ENCODE measurements at regions of chr17 and their contacts with region 1.

Region 1: GRCh38 chr17:44775136-44775837 is 16.5 kb downstream of the ADAM11 start:
- DNase-seq: peak; percentile 97
- ATAC-seq: peak; percentile 95
- H3K4me3 ChIP-seq: peak overlapping the region; percentile 14 to 70 (median 66)
- H3K4me3 Mint-ChIP-seq: peak overlapping the region; percentile 92
- H3K27ac ChIP-seq: no peak overlapping the region
- H3K27ac Mint-ChIP-seq: peak overlapping the region; percentile 47
- H3K4me1 ChIP-seq: peaks cover 17 to 26% of the 10 kb centered on the region in 2 donors
- H3K4me1 Mint-ChIP-seq: peaks cover 22% of the 10 kb centered on the region
- H3K27me3 ChIP-seq: peaks cover 0 to 39% (median 4%) of the 10 kb centered on the region in 4 experiments
- H3K27me3 Mint-ChIP-seq: peaks cover 11% of the 10 kb centered on the region
- CTCF ChIP-seq: peak; percentile 71

Region 2: DNA sequence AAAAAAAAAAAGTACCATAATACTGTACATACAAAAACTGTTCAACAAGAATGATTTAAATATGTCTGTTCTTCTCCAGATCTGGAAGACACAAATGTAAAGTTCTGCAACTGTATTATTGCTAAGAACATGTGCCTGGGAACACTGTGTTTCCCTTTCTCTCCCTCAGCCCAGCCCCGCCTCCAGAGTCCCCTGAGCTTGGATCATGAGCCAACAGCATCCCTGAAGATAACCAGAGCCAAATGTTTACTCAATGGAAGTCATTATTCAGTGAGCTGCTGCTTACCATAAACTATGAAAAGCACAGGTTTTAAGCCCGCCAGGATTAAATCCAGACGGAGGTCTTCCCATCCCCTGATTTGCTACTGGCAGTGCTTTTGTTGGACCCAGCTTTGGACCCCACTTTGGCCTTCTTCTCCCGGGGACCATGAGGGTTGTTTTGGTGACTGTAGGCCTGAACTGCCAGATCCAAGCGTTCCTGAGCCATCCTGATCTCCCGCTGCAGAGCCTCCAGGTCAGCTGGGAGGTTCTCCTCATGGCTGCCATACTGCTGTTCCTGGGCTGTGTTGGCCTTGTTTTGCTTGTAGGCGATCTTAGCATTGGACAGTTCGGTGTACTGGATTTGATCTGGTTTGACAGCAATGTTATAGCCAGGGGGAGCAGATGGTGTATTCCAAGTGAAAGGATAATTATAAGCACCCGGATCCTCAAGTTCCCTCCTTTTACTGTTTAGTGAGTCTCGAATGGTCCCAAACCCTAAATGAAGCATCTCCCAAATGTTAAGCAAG is 29.2 kb after region 1 on chr17:
- CTCF ChIA-PET with region 1: no interaction called
- POLR2A ChIA-PET with region 1: no interaction called
- intact Hi-C with region 1: no loop called
- DNase-seq: no peak
- ATAC-seq: no peak
- H3K4me3 ChIP-seq: no peak overlapping the region
- H3K4me3 Mint-ChIP-seq: no peak overlapping the region
- H3K27ac ChIP-seq: no peak overlapping the region
- H3K27ac Mint-ChIP-seq: no peak overlapping the region
- H3K4me1 ChIP-seq: no peaks in the 10 kb centered on the region
- H3K4me1 Mint-ChIP-seq: no peaks in the 10 kb centered on the region
- H3K27me3 ChIP-seq: no peaks in the 10 kb centered on the region
- H3K27me3 Mint-ChIP-seq: no peaks in the 10 kb centered on the region
- CTCF ChIP-seq: no peak

Region 3: DNA sequence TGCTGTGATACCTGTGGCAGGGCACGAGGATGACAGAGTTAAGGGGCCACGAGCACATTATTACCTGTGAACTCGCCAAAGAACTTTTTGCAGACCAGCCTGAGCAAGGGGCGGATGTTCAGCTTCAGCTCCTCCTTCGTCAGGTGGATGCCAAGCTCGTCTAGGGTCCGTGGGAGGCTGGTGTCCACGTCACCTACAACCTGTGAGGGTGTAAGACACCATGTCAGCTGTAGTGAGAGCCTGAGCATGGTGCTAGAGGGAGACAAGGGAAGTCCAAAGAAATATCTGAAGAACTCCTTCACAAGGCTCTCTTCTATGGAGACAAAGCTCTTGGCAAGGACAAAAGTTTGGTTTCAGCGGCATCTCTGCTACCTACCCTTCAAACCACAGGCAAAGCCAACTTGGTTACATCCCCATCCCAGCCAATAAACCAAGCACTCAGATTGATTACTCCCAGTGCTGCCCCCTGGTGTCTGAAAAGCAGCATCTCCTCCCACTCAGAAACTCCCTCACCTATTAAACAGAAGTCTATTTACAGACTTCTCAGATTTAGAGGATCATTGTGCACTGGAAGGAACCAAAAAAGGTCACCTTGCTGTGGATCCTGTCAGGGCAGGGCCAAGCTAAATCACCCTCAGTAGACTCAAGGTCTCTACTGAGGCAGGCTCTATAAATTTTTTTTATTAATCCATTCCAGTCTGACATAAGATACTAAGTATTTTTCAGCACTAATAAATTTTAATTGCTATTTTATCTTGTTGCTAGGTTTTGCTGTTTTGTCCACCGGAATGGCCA is 89.8 kb after region 1 on chr17:
- CTCF ChIA-PET with region 1: interaction called, 208 read pairs
- POLR2A ChIA-PET with region 1: no interaction called
- intact Hi-C with region 1: loop called (anchors 1 kb)
- DNase-seq: peak; percentile 80
- ATAC-seq: peak; percentile 60
- H3K4me3 ChIP-seq: no peak overlapping the region
- H3K4me3 Mint-ChIP-seq: no peak overlapping the region
- H3K27ac ChIP-seq: no peak overlapping the region
- H3K27ac Mint-ChIP-seq: no peak overlapping the region
- H3K4me1 ChIP-seq: no peaks in the 10 kb centered on the region
- H3K4me1 Mint-ChIP-seq: no peaks in the 10 kb centered on the region
- H3K27me3 ChIP-seq: no peaks in the 10 kb centered on the region
- H3K27me3 Mint-ChIP-seq: no peaks in the 10 kb centered on the region
- CTCF ChIP-seq: peak; percentile 95

Region 4: GRCh38 chr17:45021607-45022287 is 246.5 kb after region 1 on chr17:
- CTCF ChIA-PET with region 1: interaction called, 15 read pairs
- POLR2A ChIA-PET with region 1: interaction called, 5 read pairs
- intact Hi-C with region 1: loop called (anchors 2 kb)
- DNase-seq: peak; percentile 82
- ATAC-seq: peak; percentile 84
- H3K4me3 ChIP-seq: peak overlapping the region in 4 of 5 experiments; percentile 28 to 53 (median 44)
- H3K4me3 Mint-ChIP-seq: peak overlapping the region; percentile 75
- H3K27ac ChIP-seq: no peak overlapping the region
- H3K27ac Mint-ChIP-seq: peak overlapping the region; percentile 60
- H3K4me1 ChIP-seq: peaks cover 27 to 28% of the 10 kb centered on the region in 2 donors
- H3K4me1 Mint-ChIP-seq: peaks cover 27% of the 10 kb centered on the region
- H3K27me3 ChIP-seq: peaks cover 0 to 43% (median 34%) of the 10 kb centered on the region in 4 experiments
- H3K27me3 Mint-ChIP-seq: peaks cover 33% of the 10 kb centered on the region
- CTCF ChIP-seq: peak; percentile 90

Region 5: GRCh38 chr17:45098869-45099616 is 323.8 kb after region 1 on chr17:
- CTCF ChIA-PET with region 1: interaction called, 12 read pairs
- POLR2A ChIA-PET with region 1: no interaction called
- intact Hi-C with region 1: loop called (anchors 1 kb)
- DNase-seq: peak; percentile 78
- ATAC-seq: peak; percentile 84
- H3K4me3 ChIP-seq: no peak overlapping the region
- H3K4me3 Mint-ChIP-seq: no peak overlapping the region
- H3K27ac ChIP-seq: no peak overlapping the region
- H3K27ac Mint-ChIP-seq: peak overlapping the region; percentile 6
- H3K4me1 ChIP-seq: no peaks in the 10 kb centered on the region
- H3K4me1 Mint-ChIP-seq: peaks cover 7% of the 10 kb centered on the region
- H3K27me3 ChIP-seq: no peaks in the 10 kb centered on the region
- H3K27me3 Mint-ChIP-seq: no peaks in the 10 kb centered on the region
- CTCF ChIP-seq: peak; percentile 88